ENCODE measurements at regions of chr19 and their contacts with region 1.

Region 1: GRCh38 chr19:6087074-6087571 is 23.2 kb downstream of the RFX2 start:
- DNase-seq: no peak
- ATAC-seq: no peak
- H3K4me3 ChIP-seq: no peak overlapping the region
- H3K27ac ChIP-seq: peak overlapping the region; percentile 84
- H3K4me1 ChIP-seq: peaks cover 48% of the 10 kb centered on the region
- H3K27me3 ChIP-seq: no peaks in the 10 kb centered on the region
- CTCF ChIP-seq: no peak

Region 2: GRCh38 chr19:6048808-6049405 is 38.2 kb before region 1 on chr19:
- CTCF ChIA-PET with region 1: interaction called, 8 read pairs
- POLR2A ChIA-PET with region 1: no interaction called
- intact Hi-C with region 1: loop called (anchors 2 kb)
- DNase-seq: peak; percentile 93
- ATAC-seq: peak; percentile 98
- H3K4me3 ChIP-seq: peak overlapping the region; percentile 33
- H3K27ac ChIP-seq: no peak overlapping the region
- H3K4me1 ChIP-seq: peaks cover 9% of the 10 kb centered on the region
- H3K27me3 ChIP-seq: no peaks in the 10 kb centered on the region
- CTCF ChIP-seq: peak; percentile 91

Region 3: DNA sequence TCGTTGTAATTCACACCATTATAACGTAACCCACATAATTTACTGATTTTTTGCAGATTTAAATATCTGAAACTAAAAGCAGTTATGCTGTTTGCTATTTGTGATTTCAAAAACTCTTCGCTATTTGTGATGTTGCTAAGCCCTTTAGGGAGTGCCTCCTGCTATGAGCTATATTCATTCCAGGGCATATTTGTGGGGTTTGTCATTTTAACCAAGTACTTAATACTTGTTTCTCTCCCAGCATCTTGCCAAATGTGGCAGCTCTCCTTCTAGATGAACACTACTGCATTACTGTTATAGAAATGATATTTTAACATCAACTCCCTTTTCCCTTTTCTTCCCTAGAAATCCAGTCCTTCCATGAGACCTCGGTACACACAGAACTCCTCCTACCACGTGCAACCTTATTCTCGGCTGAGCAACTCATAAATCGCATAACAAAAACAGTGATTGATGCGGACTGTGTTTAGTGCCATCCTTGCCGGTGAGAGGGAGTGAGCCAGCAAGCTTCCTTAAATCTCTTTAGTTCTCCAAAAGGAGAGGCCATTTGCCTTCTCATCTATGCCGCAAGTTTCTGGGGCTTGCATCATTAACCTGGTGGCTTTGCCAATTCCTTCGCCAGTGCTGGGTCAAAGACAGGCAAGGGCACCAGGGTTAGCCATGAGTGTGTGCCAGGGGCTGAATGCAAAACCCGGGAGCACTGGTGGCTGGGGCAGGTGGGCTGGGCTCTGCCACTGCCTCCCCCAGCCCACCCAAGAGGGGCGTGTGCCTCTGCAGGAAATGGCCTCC is 10.3 kb before region 1 on chr19:
- CTCF ChIA-PET with region 1: no interaction called
- POLR2A ChIA-PET with region 1: interaction called, 13 read pairs
- intact Hi-C with region 1: no loop called
- DNase-seq: peak; percentile 82
- ATAC-seq: peak; percentile 96
- H3K4me3 ChIP-seq: no peak overlapping the region
- H3K27ac ChIP-seq: peak overlapping the region; percentile 17
- H3K4me1 ChIP-seq: peaks cover 13% of the 10 kb centered on the region
- H3K27me3 ChIP-seq: no peaks in the 10 kb centered on the region
- CTCF ChIP-seq: no peak

Region 4: GRCh38 chr19:6161271-6161850 is 74.2 kb after region 1 on chr19:
- CTCF ChIA-PET with region 1: no interaction called
- POLR2A ChIA-PET with region 1: no interaction called
- intact Hi-C with region 1: no loop called
- DNase-seq: peak; percentile 82
- ATAC-seq: peak; percentile 50
- H3K4me3 ChIP-seq: no peak overlapping the region
- H3K27ac ChIP-seq: no peak overlapping the region
- H3K4me1 ChIP-seq: no peaks in the 10 kb centered on the region
- H3K27me3 ChIP-seq: no peaks in the 10 kb centered on the region
- CTCF ChIP-seq: no peak